GM10248 (cell line): ENCODE measurements at regions of chr14 and their contacts with region 1.

Region 1: GRCh38 chr14:68328509-68328908 is 464.4 kb downstream of the ZFP36L1 start:
- DNase-seq: peak; percentile 25
- CTCF ChIP-seq: no peak

Region 2: DNA sequence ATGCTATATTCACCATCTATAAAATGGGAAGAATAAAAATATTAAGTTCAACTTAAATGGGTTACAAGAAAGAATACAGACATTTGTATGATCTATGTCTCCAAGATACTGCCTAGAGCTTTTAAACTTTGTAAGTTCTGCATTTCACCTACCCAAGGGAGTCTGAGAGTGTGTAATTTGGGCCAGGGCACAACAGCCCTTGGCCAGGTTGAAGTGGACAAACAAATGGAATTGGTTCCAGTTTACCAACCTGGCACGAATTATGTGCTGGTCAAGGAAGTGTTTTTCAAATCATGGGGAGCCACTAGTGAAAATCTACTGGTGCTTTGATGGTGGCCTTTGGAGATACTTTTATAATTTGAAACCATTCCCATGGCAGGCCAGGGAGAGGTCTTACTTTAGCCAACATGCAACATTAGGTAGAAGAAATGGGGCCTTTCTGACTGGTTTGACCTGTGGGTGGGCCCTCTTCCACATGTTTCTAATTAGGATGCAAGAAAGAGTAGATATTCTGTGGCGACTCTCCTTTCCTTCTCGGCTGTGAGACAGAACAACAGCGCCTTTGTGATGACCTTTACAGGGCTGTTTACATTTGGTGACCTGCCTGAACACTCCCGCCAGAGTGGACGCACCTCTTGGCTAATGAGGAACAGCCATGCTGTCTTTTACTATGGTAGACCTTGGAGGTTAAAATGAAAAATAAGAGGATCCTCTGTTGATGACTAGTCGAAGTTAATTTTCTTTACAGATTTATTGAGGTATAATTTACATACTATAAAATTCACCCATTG is 12.2 kb before region 1 on chr14:
- CTCF ChIA-PET with region 1: interaction called, 13 read pairs
- POLR2A ChIA-PET with region 1: no interaction called
- DNase-seq: no peak
- CTCF ChIP-seq: no peak

Region 3: GRCh38 chr14:68349900-68350629 is 21.6 kb after region 1 on chr14:
- CTCF ChIA-PET with region 1: interaction called, 10 read pairs
- POLR2A ChIA-PET with region 1: no interaction called
- DNase-seq: no peak
- CTCF ChIP-seq: no peak

Region 4: GRCh38 chr14:68377459-68377858 is 49.0 kb after region 1 on chr14:
- CTCF ChIA-PET with region 1: no interaction called
- POLR2A ChIA-PET with region 1: no interaction called
- DNase-seq: no peak
- CTCF ChIP-seq: no peak